Activated CD8-positive, alpha-beta T cell treated with anti-CD3 and anti-CD28 coated beads for 36 hours (primary cell): ENCODE measurements at regions of chr7 and their contacts with region 1.

Region 1: DNA sequence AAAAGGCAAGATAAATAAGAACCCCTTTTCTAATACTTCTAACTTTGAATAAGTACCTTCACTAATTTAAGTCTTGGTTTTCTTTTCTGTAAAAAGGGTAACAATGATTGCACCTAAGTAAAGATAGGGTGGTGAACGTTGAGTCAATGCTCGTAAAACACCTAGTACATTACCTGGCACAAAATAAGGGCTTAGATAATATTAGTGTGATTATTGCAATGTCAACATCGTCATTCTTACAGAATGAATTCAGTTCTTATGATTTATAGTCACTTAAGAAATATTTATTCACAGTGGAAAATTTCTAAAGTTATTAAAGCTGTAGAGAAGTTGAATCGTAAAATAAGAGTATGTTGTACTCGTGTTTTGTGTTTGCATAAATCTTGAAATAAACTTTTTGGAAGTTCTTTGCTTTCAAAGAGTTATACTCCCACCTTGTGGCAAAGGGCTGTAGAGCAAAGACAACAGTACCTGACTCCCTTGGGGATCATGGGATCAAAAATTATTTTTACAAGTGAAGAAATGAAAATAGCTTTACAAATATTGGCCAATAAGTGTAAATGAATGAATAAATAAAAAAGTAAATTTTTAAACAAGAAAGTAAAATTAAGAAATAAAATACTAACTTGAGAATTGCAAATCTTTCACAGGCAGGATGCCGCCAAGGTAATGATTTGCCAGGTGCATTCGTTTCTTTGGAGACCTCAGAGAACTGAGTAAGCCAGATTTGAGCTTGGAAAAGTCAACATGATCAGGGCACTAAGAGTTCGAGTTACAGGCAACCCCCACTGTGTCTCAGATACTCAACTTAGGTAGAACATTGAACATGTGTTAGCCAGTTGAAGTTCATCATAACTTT is 285.8 kb upstream of the CACNA2D1 start:
- DNase-seq: no peak
- ATAC-seq: no peak
- H3K4me3 Mint-ChIP-seq: no peak overlapping the region
- H3K27ac Mint-ChIP-seq: no peak overlapping the region
- H3K4me1 Mint-ChIP-seq: no peaks in the 10 kb centered on the region
- H3K27me3 Mint-ChIP-seq: no peaks in the 10 kb centered on the region
- CTCF ChIP-seq: peak; percentile 41

Region 2: GRCh38 chr7:82044497-82045080 is 684.8 kb before region 1 on chr7:
- CTCF ChIA-PET with region 1: interaction called, 3 read pairs
- POLR2A ChIA-PET with region 1: no interaction called
- intact Hi-C with region 1: loop called (anchors 10 kb)
- DNase-seq: peak; percentile 37
- ATAC-seq: no peak
- H3K4me3 Mint-ChIP-seq: no peak overlapping the region
- H3K27ac Mint-ChIP-seq: no peak overlapping the region
- H3K4me1 Mint-ChIP-seq: no peaks in the 10 kb centered on the region
- H3K27me3 Mint-ChIP-seq: peaks cover 2% of the 10 kb centered on the region
- CTCF ChIP-seq: peak; percentile 69

Region 3: DNA sequence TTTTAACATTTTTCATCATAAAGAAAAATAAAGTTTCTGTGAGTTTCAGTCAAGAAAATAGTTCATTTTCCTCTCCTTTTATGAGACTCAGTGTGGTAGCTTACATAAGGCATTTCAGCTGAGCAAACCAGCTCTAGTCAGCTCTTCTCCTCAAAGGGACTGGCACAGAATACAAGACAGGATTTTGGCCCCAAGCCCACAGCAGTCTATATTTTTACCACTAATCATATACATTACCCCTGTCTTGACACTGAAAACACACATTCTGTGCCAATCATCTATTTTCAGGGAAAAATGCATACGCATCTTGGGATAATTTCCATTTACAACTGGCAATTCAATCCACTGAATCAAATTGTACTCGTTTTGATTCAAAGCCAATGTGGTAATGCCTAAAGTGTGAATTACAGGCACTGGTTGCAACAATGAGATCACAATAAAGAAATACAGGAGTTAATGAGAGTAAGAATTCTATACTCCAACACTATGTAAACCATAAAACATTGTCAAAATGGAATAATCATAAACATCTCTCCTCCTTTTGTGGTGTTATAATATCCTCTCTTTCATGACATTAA is 472.2 kb before region 1 on chr7:
- CTCF ChIA-PET with region 1: no interaction called
- POLR2A ChIA-PET with region 1: no interaction called
- intact Hi-C with region 1: loop called (anchors 10 kb)
- DNase-seq: no peak
- ATAC-seq: no peak
- H3K4me3 Mint-ChIP-seq: no peak overlapping the region
- H3K27ac Mint-ChIP-seq: no peak overlapping the region
- H3K4me1 Mint-ChIP-seq: no peaks in the 10 kb centered on the region
- H3K27me3 Mint-ChIP-seq: no peaks in the 10 kb centered on the region
- CTCF ChIP-seq: no peak